ENCODE measurements at regions of chr10 and their contacts with region 1.

Region 1: DNA sequence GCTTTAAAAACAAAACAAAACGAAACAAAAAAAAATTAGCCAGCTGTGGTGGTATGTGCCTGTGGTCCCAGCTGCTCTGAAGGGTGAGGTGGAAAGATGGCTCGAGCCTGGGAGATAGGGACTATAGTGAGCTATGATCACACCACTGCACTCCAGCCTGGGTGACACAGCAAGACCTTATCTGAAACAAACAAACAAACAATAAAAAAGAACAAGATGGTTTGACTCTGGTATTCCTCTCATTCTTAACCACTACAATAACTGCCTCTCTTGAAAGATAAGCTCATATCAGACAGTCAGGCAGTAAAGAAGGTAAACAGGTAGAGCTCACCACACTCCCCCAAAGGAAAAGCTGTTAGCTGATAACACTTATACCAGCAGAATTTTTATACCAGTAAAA is 14.1 kb upstream of the DUSP5 start:
- DNase-seq: no peak
- H3K4me3 ChIP-seq: no peak overlapping the region
- H3K27ac ChIP-seq: no peak overlapping the region
- H3K4me1 ChIP-seq: peaks cover 35% of the 10 kb centered on the region
- H3K27me3 ChIP-seq: no peaks in the 10 kb centered on the region
- CTCF ChIP-seq: no peak

Region 2: DNA sequence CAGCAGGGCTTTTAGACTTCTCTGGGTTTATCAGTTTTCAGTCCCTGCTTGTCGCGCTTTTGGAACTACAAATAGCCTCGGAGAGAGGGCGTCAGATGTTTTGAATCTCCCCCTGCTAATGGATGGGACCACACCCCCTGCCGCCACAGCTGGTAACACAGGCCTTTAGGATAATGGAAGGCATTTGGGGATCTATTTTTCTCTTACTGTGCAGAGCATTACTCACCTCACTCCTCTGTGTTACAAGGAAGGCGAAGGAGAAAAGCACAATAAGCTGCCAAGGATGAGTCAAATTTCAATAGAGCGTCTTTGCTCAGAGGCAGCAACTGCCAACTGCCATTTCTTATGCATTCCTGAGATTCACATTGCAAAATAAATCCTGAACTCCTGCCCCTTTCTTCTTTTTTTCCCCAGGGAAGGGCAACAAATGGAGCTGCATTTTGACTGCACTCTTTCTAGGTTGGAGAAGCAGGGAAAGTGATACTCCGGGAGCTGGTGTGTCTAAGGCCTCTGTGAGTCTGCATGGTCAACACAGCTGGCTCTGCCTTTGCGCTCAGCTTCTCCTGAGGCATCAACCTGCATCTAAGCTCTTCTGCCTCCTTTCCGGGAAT is 147.4 kb before region 1 on chr10:
- CTCF ChIA-PET with region 1: no interaction called
- dilution Hi-C with region 1: no loop called
- in situ Hi-C with region 1: no loop called
- intact Hi-C with region 1: no loop called
- DNase-seq: peak; percentile 87
- H3K4me3 ChIP-seq: no peak overlapping the region
- H3K27ac ChIP-seq: peak overlapping the region; percentile 13
- H3K4me1 ChIP-seq: peaks cover 16% of the 10 kb centered on the region
- H3K27me3 ChIP-seq: no peaks in the 10 kb centered on the region
- CTCF ChIP-seq: peak in 1 of 2 donors; percentile 23

Region 3: GRCh38 chr10:110512461-110513187 is 29.0 kb after region 1 on chr10:
- CTCF ChIA-PET with region 1: interaction called, 10 read pairs
- dilution Hi-C with region 1: no loop called
- in situ Hi-C with region 1: no loop called
- intact Hi-C with region 1: no loop called
- DNase-seq: peak; percentile 87
- H3K4me3 ChIP-seq: no peak overlapping the region
- H3K27ac ChIP-seq: peak overlapping the region; percentile 21
- H3K4me1 ChIP-seq: peaks cover 20% of the 10 kb centered on the region
- H3K27me3 ChIP-seq: no peaks in the 10 kb centered on the region
- CTCF ChIP-seq: no peak

Measured in mammary epithelial cell (primary cell).